Dendritic cell treated with granulocyte-macrophage colony-stimulating factor and Interleukin-4, amounts not matched to agents 40 ng/mL and 50 ng/mL, for 4 days (primary cell): ENCODE measurements at regions of chr6 and their contacts with region 1.

Region 1: DNA sequence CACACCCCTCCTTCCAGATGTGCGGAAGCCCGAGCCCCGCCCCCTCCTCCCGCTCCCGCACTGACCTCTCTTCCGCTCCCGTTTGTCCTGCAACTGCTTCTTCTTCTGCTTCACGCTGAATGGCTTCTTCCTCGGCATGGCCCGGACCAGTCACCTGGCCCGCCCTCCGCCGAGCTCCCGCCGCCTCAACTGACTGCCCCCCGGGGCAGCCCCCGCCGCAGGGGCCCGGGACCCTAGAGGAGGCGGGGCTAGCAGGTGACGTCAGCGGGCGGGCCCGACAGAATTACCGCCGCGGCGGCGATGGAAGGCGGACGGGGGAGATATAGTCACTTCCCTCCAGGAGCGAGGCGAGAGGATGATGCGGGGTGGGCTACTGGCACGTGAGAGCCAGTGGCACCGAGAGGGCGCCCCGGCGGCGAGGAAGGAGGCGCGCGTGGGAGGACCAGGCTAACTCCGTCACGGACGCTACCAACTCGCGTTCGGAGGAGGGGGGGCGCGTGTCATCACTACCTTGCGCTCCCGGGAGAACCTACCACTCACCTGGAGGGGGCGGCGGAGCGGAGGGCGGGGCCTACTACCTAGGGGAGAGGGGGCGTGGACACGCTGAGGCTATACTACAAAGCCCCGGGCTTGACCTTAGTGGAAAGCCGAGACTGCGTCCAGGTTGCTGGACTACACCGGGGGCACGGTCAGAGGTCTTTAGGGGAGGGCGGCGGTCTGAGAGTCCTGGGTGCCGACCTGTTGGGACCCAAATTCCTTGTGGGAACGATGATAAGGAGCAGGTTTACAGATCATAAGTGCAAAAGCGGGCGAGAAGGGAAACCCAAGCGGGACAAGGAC is at the start of gene GNL1:
- H3K4me3 Mint-ChIP-seq: peak within 1 kb of the TSS; percentile 99
- H3K27ac Mint-ChIP-seq: peak within 1 kb of the TSS; percentile 100
- H3K4me1 Mint-ChIP-seq: peaks cover 34% of the 10 kb centered on the region
- H3K27me3 Mint-ChIP-seq: no peaks in the 10 kb centered on the region

Region 2: GRCh38 chr6:30396833-30397479 is 159.3 kb before region 1 on chr6:
- intact Hi-C with region 1: no loop called
- H3K4me3 Mint-ChIP-seq: no peak overlapping the region
- H3K27ac Mint-ChIP-seq: no peak overlapping the region
- H3K4me1 Mint-ChIP-seq: no peaks in the 10 kb centered on the region
- H3K27me3 Mint-ChIP-seq: peaks cover 65% of the 10 kb centered on the region

Region 3: DNA sequence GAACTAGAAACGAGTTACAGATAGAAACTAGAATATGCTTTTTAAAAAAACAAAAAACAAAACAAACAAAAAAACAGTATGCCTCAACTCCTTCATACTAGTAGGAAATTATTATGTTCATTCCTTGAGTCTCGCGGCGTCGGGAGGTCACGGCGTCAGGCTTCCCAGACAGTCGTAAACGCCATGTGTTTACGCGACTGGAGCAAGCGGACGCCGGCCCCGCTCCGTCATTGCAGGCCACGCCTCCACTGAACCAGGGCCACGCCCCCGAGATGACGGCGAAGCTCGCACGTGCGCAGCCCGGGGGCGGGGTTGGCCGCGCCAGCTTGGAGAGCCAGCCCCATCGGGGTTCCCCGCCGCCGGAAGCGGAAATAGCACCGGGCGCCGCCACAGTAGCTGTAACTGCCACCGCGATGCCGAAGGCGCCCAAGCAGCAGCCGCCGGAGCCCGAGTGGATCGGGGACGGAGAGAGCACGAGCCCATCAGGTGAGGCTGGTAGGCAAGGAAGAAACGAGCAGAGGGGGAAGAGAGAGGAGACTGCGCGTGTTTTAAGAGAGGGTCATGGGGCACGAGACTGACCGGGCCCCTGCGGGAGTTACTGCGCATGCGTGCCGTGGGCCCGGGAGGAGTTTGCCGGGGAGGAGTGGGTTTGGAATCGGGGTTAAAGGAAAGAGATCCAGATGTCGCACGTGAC is 14.9 kb after region 1 on chr6 and contains the start of gene ABCF1:
- intact Hi-C with region 1: loop called (anchors 1 kb)
- H3K4me3 Mint-ChIP-seq: peak within 1 kb of the TSS; percentile 92
- H3K27ac Mint-ChIP-seq: peak within 1 kb of the TSS; percentile 89
- H3K4me1 Mint-ChIP-seq: peaks cover 51% of the 10 kb centered on the region
- H3K27me3 Mint-ChIP-seq: no peaks in the 10 kb centered on the region

Region 4: DNA sequence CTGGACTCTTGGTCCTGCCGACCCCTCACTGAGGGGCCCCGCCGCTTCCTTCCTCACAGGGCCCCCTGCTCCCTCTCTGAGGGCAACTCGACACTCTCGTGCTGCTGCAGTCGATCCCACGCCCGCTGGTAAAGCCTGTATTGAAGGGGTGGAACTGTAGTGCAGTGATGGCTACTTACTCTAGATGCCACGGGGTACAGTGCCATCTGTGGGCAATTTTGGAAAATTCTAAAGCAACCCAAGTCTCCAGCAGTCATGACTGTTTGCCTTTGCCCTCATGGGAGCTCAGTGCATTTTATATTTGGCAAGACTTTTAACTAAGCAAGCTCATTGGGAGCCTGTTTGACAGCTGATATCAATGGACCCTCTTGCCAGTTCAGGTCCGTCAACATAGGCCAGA is 84.2 kb after region 1 on chr6:
- intact Hi-C with region 1: no loop called
- H3K4me3 Mint-ChIP-seq: no peak overlapping the region
- H3K27ac Mint-ChIP-seq: no peak overlapping the region
- H3K4me1 Mint-ChIP-seq: peaks cover 26% of the 10 kb centered on the region
- H3K27me3 Mint-ChIP-seq: no peaks in the 10 kb centered on the region